Colonic mucosa (tissue), 4 donors: ENCODE measurements at regions of chr1 and their contacts with region 1.

Region 1: GRCh38 chr1:43073490-43074230 is 98.4 kb downstream of the EBNA1BP2 start:
- DNase-seq: peak; percentile 83
- H3K4me3 ChIP-seq: no peak overlapping the region
- H3K27ac ChIP-seq: no peak overlapping the region
- H3K4me1 ChIP-seq: no peaks in the 10 kb centered on the region
- H3K27me3 ChIP-seq: no peaks in the 10 kb centered on the region
- CTCF ChIP-seq: peak; percentile 82

Region 2: DNA sequence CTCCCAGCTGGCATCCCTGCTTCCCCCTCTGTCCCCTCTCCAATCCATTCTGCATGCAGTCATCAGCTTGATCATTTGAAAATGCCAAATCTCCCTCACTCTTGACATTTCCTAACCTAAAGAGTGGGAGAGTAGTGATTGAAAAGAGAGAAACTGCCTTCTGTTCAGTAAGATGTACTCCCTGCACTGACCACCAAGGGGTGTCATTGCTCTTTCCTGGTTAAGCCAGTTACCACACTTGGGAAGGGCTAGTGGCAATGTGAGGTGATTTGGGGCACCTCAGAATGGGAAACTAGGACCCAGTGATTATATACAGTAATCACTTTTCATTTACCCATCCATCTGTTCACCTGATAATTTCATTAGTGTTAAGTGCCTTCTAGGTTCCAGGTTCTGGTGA is 295.8 kb before region 1 on chr1:
- intact Hi-C with region 1: loop called (anchors 5 kb)
- DNase-seq: peak; percentile 26
- H3K4me3 ChIP-seq: no peak overlapping the region
- H3K27ac ChIP-seq: no peak overlapping the region
- H3K4me1 ChIP-seq: no peaks in the 10 kb centered on the region
- H3K27me3 ChIP-seq: no peaks in the 10 kb centered on the region
- CTCF ChIP-seq: peak; percentile 48

Region 3: GRCh38 chr1:42913426-42914091 is 160.1 kb before region 1 on chr1:
- intact Hi-C with region 1: loop called (anchors 2 kb)
- DNase-seq: peak; percentile 73
- H3K4me3 ChIP-seq: no peak overlapping the region
- H3K27ac ChIP-seq: no peak overlapping the region
- H3K4me1 ChIP-seq: no peaks in the 10 kb centered on the region
- H3K27me3 ChIP-seq: no peaks in the 10 kb centered on the region
- CTCF ChIP-seq: peak; percentile 60